Heart left ventricle (tissue), 16 donors: ENCODE measurements at regions of chr1 and their contacts with region 1.

Region 1: DNA sequence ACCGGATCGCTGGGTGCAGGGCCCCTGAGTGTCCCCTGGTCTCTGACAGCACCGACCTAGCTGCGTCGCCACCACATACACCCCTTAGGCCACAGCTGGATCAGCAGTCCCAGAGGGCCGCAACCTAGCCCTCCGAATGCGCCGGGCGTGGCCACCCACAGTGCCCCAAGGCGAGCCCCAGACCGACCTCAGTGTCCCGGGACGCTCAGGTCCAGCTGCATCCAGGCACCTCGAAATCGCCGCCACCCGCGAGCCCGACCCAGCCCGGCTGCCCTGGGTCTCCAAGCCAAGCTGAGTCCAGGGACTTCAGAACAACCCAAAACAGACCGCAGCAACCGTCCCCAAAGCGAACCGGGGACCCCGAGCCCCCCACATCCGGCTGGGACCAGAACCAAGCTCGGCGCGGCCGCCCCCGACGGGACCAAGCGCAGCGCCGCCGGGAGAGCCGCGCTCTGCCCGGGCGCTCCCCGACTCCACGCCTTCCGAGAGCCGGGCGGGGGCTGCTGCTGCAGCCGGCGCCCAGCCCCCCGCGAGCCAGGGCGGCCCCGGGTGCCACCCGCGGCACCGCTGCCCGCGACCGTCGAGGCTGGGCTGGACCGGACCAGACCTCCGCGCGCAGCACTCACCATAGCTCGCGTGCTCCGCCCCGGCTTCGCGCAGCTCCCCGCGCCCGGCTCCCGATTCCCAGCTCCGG is 54.6 kb upstream of the ECE1 start:
- DNase-seq: peak in 3 of 5 donors; percentile 31 to 70 (median 48)
- ATAC-seq: peak in 3 of 4 donors; percentile 3 to 47 (median 42)
- H3K4me3 ChIP-seq: peak overlapping the region; percentile 46 to 96 (median 78)
- H3K27ac ChIP-seq: peak overlapping the region; percentile 64 to 92 (median 87)
- H3K4me1 ChIP-seq: peaks cover 0 to 59% (median 34%) of the 10 kb centered on the region in 12 donors
- H3K27me3 ChIP-seq: peaks cover 0 to 22% (median 0%) of the 10 kb centered on the region in 9 donors
- CTCF ChIP-seq: no peak
- POLR2A ChIP-seq: no peak

Region 2: DNA sequence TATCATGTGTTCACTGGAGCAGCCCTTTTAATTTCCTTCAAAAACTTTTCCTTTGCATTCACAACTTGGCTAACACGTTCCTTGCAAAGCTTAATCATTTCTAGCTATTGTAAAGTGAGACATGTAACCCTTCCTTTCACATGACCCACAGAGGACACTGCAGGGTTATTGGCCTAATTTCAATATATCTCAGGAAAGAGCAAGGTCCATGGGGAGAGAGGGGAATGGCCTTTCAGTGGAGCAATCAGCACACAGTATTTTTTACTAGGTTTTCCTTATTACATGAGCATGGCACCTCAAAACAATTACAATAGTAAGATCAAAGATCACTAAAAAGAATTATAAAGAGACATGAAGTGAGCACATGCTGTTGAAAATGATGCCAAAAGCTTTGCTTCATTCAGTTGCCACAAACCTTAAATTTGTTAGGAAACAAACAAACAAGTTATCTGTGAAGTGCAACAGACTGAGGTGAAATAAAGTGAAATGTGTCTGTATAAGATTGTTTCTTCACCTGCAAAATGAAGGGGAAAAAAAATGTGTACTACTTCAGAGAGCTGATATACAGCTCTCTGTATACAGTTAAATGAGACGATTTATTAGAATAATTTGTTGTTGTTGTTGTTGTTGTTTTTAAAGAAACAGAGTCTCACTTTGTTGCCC is 229.7 kb before region 1 on chr1:
- intact Hi-C with region 1: no loop called
- DNase-seq: no peak
- ATAC-seq: peak in 3 of 4 donors; percentile 38 to 41 (median 39)
- H3K4me3 ChIP-seq: no peak overlapping the region
- H3K27ac ChIP-seq: no peak overlapping the region
- H3K4me1 ChIP-seq: peaks cover 0 to 40% (median 10%) of the 10 kb centered on the region in 12 donors
- H3K27me3 ChIP-seq: no peaks in the 10 kb centered on the region
- CTCF ChIP-seq: no peak
- POLR2A ChIP-seq: no peak

Region 3: GRCh38 chr1:21261551-21262281 is 83.2 kb before region 1 on chr1:
- intact Hi-C with region 1: loop called in 4 of 10 experiments (anchors 5 kb)
- DNase-seq: peak; percentile 80 to 95 (median 89)
- ATAC-seq: peak; percentile 77 to 89 (median 88)
- H3K4me3 ChIP-seq: peak overlapping the region in 7 of 12 donors; percentile 6 to 41 (median 26)
- H3K27ac ChIP-seq: peak overlapping the region; percentile 85 to 98 (median 94)
- H3K4me1 ChIP-seq: peaks cover 17 to 66% (median 54%) of the 10 kb centered on the region in 12 donors
- H3K27me3 ChIP-seq: no peaks in the 10 kb centered on the region
- CTCF ChIP-seq: no peak
- POLR2A ChIP-seq: no peak